Left ventricle myocardium inferior (tissue), 1 donor: ENCODE measurements at regions of chr21 and their contacts with region 1.

Region 1: DNA sequence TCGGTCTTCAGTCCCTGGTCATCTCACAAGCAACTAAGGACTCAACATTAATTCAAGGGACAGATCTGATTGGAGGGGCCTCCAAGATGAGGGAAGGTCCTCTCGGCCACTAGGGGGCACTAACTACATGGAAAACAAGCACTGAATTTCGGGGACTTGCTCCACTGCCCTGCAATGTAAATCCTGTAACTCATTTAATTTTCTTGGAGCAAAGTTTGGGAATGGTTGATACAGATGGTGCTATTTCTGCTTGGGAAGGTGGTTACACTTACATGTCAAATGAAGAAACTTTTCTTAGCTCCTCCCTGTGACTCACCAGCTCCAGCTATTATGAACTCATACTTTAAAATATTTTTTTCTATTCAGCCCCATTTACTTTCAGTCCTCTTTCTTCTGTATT is 97.4 kb upstream of the KCNJ15 start:
- DNase-seq: peak; percentile 21
- H3K4me3 ChIP-seq: no peak overlapping the region
- H3K27ac ChIP-seq: no peak overlapping the region
- H3K4me1 ChIP-seq: no peaks in the 10 kb centered on the region
- H3K27me3 ChIP-seq: peaks cover 30% of the 10 kb centered on the region
- CTCF ChIP-seq: peak; percentile 85

Region 2: DNA sequence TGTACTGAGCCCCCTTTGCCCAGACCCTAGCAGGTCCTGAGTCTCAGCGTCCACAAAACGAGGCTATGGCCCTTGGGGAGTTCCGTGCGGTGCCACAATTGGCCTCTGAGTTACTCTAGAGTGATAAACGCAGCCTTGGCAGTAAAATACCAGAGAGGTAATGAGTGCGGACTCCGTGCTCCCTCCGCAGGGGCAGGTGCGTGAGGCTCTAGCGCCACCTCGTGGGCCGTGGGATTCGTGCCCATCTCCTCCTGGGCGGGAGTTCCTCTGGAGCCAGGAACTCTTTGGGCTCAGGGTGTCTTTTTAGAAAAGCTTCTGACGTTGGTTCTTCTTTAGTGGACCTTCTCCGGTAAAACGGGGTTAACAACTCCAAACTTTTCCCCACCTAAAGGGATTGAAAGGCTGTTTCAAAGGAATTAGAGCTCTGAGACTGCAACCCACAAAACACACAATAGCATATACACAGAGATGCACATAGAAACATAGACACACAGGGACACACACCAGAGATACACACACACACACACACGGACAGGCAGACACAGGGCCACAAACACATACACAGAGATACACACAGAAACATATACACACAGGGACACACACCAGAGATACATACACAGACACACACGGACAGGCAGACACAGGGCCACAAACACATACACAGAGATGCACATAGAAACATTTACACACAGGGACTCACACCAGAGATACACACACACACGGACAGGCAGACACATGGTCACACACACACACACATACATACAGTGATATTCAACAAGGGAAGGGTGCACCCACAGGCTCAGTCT is 196.8 kb after region 1 on chr21:
- intact Hi-C with region 1: loop called (anchors 5 kb)
- DNase-seq: peak; percentile 76
- H3K4me3 ChIP-seq: no peak overlapping the region
- H3K27ac ChIP-seq: no peak overlapping the region
- H3K4me1 ChIP-seq: peaks cover 11% of the 10 kb centered on the region
- H3K27me3 ChIP-seq: peaks cover 23% of the 10 kb centered on the region
- CTCF ChIP-seq: peak; percentile 96